HEK293 (cell line): ENCODE measurements at regions of chr1 and their contacts with region 1.

Region 1: GRCh38 chr1:40691538-40692428 is at the start of gene NFYC:
- H3K4me3 ChIP-seq: peak within 1 kb of the TSS; percentile 97
- H3K27ac ChIP-seq: peak within 1 kb of the TSS; percentile 95
- H3K4me1 ChIP-seq: peaks cover 11% of the 10 kb centered on the region; the same call in 1 of the 2 replicates
- CTCF ChIP-seq: peak; percentile 26; the same call in 1 of the 2 replicates

Region 2: GRCh38 chr1:40531381-40532061 is 160.3 kb before region 1 on chr1 and contains the start of gene ZNF684:
- CTCF ChIA-PET with region 1: interaction called, 3 read pairs
- POLR2A ChIA-PET with region 1: interaction called, 17 read pairs
- H3K4me3 ChIP-seq: peak within 1 kb of the TSS; percentile 66
- H3K27ac ChIP-seq: peak within 1 kb of the TSS; percentile 38; the same call in 1 of the 2 replicates
- H3K4me1 ChIP-seq: no peaks in the 10 kb centered on the region
- CTCF ChIP-seq: no peak

Region 3: GRCh38 chr1:40646315-40646714 is 45.5 kb before region 1 on chr1:
- CTCF ChIA-PET with region 1: no interaction called
- POLR2A ChIA-PET with region 1: no interaction called
- H3K4me3 ChIP-seq: no peak overlapping the region
- H3K27ac ChIP-seq: no peak overlapping the region
- H3K4me1 ChIP-seq: no peaks in the 10 kb centered on the region; the same call in 1 of the 2 replicates
- CTCF ChIP-seq: no peak

Region 4: DNA sequence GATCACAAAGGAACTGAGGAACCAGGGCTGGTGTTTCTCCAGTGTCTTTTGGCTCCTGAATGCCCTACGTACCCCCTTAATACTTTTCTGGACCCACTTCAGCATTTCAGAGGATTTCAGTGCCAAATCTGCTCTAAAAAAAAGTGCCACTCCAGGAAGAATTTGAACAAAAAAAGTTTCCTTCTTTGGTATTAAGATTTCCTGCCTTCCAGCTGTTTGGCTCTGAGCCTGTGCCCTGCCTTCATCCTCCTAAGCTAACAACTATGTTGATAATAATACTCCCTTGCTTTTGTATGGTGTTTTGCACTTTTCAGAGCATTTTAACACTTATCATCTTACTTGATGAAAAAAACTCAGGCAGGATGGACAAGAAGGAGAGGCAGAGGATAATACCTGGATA is 15.3 kb before region 1 on chr1:
- CTCF ChIA-PET with region 1: interaction called, 5 read pairs
- POLR2A ChIA-PET with region 1: interaction called, 13 read pairs
- H3K4me3 ChIP-seq: no peak overlapping the region
- H3K27ac ChIP-seq: no peak overlapping the region
- H3K4me1 ChIP-seq: no peaks in the 10 kb centered on the region
- CTCF ChIP-seq: no peak

Region 5: DNA sequence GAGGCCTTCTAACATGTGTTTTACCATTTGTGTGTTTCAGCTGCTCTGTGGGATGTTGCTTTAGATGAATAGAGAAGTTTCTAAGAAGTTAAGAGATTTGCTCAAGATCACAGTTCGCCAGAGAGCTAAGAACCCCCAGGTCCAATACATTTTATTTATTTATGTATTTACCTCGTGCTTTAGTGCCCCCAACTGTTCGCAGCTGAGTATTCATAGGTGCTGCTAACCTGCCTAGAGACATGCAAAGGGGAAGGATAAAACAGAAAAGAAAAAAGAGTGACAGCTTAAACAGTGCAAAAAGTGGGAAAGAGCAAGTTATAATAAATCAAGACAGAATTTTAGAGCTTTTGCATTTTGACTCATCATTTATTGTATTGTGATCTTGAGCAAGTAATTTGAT is 30.9 kb after region 1 on chr1:
- CTCF ChIA-PET with region 1: interaction called, 3 read pairs
- POLR2A ChIA-PET with region 1: interaction called, 14 read pairs
- H3K4me3 ChIP-seq: no peak overlapping the region
- H3K27ac ChIP-seq: no peak overlapping the region; the same call in 1 of the 2 replicates
- H3K4me1 ChIP-seq: peaks cover 13% of the 10 kb centered on the region; the same call in 1 of the 2 replicates
- CTCF ChIP-seq: no peak

Region 6: GRCh38 chr1:40774266-40774998 is 82.6 kb after region 1 on chr1:
- CTCF ChIA-PET with region 1: interaction called, 18 read pairs
- POLR2A ChIA-PET with region 1: interaction called, 9 read pairs
- H3K4me3 ChIP-seq: no peak overlapping the region
- H3K27ac ChIP-seq: no peak overlapping the region
- H3K4me1 ChIP-seq: no peaks in the 10 kb centered on the region
- CTCF ChIP-seq: peak; percentile 39; the same call in 1 of the 2 replicates